ENCODE measurements at regions of chr7 and their contacts with region 1.

Region 1: GRCh38 chr7:23474094-23474828 is 4.0 kb upstream of the IGF2BP3 start:
- DNase-seq: peak; percentile 99
- H3K4me3 ChIP-seq: peak overlapping the region; percentile 85
- H3K27ac ChIP-seq: peak overlapping the region; percentile 90
- H3K4me1 ChIP-seq: peaks cover 28% of the 10 kb centered on the region
- CTCF ChIP-seq: no peak

Region 2: DNA sequence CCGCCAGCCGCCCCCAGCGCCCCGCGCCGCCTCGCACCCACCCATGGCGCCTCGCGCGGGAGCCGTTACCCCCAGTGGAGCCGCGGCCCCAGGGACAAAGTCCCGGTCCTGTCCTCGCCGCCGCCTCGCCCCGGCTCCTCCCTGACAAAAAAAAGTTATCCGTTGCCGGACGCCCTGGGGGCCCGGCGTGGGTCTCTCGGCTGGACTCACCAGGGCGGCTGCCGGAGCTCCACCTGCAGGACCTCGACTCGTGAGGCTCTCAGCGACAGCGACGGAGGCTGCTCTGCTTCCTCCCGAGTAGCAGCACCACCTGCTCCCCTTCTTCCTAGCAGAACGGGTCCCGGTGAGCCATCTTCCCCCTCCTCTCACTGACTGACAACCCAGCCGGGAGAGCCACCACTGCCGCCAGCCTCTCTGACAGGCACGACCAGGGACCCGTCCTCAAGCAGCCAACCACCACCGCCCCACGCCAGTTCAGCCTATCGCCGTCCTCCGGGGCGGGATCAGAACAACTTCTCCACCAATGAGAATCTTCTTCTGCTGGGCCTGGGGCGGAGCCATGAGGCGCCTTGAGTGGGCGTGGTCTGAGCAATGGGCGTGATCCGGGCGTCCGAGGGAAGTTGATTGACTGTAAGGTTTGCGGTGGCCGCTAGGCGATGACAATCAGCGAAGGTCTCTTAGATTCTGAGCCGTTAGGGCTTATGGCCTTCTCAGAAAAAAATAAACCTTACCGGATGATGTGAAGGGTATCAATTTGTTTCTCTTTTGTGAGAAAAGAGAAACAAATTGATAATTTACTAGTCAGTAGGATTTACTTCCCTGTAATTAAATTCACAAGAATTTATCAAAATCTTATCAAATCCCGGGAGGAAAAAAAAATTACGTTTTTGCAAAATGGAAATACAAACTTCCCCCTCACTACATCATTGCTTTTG is 460.3 kb before region 1 on chr7 and contains the start of gene HYCC1:
- CTCF ChIA-PET with region 1: no interaction called
- POLR2A ChIA-PET with region 1: no interaction called
- intact Hi-C with region 1: loop called (anchors 10 kb)
- DNase-seq: peak; percentile 99
- H3K4me3 ChIP-seq: peak within 1 kb of the TSS; percentile 98
- H3K27ac ChIP-seq: peak within 1 kb of the TSS; percentile 84
- H3K4me1 ChIP-seq: peaks cover 75% of the 10 kb centered on the region
- CTCF ChIP-seq: peak; percentile 79
- total RNA-seq, gene HYCC1: 43.3 and 69.9 TPM in 2 replicates

Region 3: GRCh38 chr7:23234569-23235296 is 239.5 kb before region 1 on chr7:
- CTCF ChIA-PET with region 1: no interaction called
- POLR2A ChIA-PET with region 1: no interaction called
- intact Hi-C with region 1: no loop called
- DNase-seq: no peak
- H3K4me3 ChIP-seq: no peak overlapping the region
- H3K27ac ChIP-seq: no peak overlapping the region
- H3K4me1 ChIP-seq: peaks cover 3% of the 10 kb centered on the region
- CTCF ChIP-seq: no peak

Region 4: DNA sequence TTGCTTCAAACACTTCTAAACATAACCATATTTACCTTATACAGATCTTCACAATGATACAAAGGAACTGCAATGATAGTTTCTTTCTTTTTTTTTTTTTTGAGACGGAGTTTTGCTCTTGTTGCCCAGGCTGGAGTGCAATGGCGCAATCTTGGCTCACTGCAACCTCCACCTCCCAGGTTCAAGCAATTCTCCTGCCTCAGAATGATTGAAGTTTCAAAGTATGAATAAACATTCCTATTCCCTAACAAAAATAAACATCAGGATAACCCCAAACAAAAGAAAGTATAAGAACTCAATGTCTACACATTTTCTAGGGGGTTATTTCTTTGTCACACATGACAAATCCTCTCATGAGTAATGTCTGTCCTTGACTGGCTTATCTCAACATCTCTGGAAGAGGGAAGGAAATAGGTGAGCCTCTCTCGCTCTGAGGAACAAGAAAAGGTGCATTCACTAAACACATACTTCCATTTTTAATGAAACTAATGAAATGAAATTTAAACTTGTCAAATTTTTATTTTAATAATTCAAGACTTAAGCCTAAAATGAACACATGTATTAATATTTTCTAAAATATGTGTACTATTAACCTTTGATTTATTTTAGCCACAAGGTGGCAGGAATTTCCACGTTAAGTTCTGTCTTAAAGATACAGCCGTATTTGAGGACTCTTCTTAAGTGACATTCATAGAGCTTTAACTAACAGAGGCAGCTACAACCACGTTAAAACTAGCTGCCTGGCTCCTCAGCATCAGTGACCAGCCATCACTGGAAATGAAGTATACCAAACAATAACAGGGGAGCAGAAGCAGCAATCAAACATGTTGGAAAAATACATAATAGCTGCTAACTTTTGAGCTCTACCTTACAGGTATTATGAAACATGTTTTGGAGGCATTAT is 116.8 kb before region 1 on chr7:
- CTCF ChIA-PET with region 1: interaction called, 3 read pairs
- POLR2A ChIA-PET with region 1: interaction called, 14 read pairs
- intact Hi-C with region 1: no loop called
- DNase-seq: peak; percentile 77
- H3K4me3 ChIP-seq: no peak overlapping the region
- H3K27ac ChIP-seq: peak overlapping the region; percentile 17
- H3K4me1 ChIP-seq: peaks cover 37% of the 10 kb centered on the region
- CTCF ChIP-seq: peak; percentile 87

Region 5: DNA sequence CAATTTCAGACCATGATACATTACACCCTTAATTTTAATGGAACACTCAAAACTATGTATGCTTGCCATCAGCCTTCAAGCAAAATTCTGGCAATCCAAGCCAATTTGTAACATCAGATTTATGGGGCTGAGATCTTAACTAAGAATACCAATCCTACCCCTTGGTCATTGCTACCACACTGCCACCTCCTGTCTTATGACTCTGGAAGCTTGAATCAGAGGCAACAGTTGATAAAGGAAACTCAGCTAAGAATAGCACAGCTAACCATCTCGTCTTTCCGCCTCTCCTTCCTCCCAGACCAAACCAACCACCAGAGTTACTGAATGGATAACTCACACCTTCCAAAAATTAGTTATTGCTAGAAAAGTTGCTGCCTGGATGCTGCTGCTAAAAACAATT is 11.4 kb before region 1 on chr7:
- CTCF ChIA-PET with region 1: no interaction called
- POLR2A ChIA-PET with region 1: interaction called, 12 read pairs
- intact Hi-C with region 1: no loop called
- DNase-seq: peak; percentile 33
- H3K4me3 ChIP-seq: no peak overlapping the region
- H3K27ac ChIP-seq: no peak overlapping the region
- H3K4me1 ChIP-seq: peaks cover 48% of the 10 kb centered on the region
- CTCF ChIP-seq: peak; percentile 61

Region 6: DNA sequence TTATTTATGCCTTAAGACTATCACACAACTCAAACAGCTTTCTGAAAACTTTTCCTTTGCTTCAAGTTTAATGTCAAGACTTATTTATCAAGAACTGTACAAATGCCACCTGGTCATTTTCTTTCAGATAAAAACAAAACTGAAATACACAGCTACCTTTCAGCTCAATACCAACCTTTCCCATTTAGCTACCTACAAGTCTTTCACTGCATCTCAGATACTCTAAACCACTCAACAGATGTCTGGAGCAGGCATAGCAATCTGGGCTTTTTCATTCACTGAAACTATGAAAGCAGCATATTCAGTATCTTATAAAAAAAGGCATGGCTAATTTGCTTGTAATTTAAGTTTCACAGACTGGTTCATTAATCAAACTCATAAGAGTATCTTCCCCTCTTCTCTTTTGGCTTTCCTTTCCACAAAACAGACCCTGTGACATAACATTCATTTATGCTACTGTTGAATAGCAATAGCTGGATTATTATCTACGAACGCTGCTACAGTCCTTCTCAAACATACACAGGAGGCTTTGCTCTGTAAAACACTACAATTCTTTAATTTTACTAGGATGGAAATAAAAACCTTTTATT is 49.3 kb after region 1 on chr7:
- CTCF ChIA-PET with region 1: no interaction called
- POLR2A ChIA-PET with region 1: interaction called, 10 read pairs
- intact Hi-C with region 1: no loop called
- DNase-seq: no peak
- H3K4me3 ChIP-seq: no peak overlapping the region
- H3K27ac ChIP-seq: no peak overlapping the region
- H3K4me1 ChIP-seq: peaks cover 28% of the 10 kb centered on the region
- CTCF ChIP-seq: no peak

Region 7: GRCh38 chr7:23622506-23622925 is 148.3 kb after region 1 on chr7:
- CTCF ChIA-PET with region 1: no interaction called
- POLR2A ChIA-PET with region 1: no interaction called
- intact Hi-C with region 1: no loop called
- DNase-seq: no peak
- H3K4me3 ChIP-seq: no peak overlapping the region
- H3K27ac ChIP-seq: no peak overlapping the region
- H3K4me1 ChIP-seq: no peaks in the 10 kb centered on the region
- CTCF ChIP-seq: no peak

Measured in OCI-LY7 (cell line).